T-cell (primary cell): ENCODE measurements at regions of chr1 and their contacts with region 1.

Region 1: GRCh38 chr1:78839704-78840277 is 166.7 kb downstream of the ADGRL4 start:
- DNase-seq: peak in 5 of 35 experiments; percentile 1 to 48 (median 2)
- ATAC-seq: no peak
- H3K4me3 ChIP-seq: no peak overlapping the region
- H3K4me3 Mint-ChIP-seq: no peak overlapping the region
- H3K27ac ChIP-seq: no peak overlapping the region
- H3K27ac Mint-ChIP-seq: no peak overlapping the region
- H3K4me1 ChIP-seq: peaks cover 0 to 2% of the 10 kb centered on the region in 2 experiments
- H3K4me1 Mint-ChIP-seq: peaks cover 13 to 21% (median 13%) of the 10 kb centered on the region in 3 donors
- H3K27me3 ChIP-seq: no peaks in the 10 kb centered on the region
- H3K27me3 Mint-ChIP-seq: no peaks in the 10 kb centered on the region

Region 2: DNA sequence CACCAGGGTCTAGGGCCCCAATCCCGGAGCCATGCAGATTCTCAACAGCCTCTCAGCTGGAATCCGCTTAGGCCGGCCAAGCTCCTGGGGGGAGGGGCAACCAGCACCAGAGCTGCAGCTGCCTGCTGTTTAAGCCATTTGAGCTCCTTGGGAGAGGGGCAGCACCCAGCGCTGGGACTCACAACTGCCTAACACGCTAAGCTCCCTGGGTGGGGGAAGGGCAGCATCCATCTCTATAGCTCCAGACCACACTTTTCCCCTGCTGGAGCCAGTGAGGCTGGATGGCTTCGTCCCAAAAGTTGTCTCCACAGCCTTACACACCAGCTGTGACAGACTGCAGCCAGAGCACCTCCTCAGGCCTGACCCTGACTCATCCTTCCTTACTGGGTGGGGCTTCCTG is 355.9 kb before region 1 on chr1:
- CTCF ChIA-PET with region 1: no interaction called
- POLR2A ChIA-PET with region 1: no interaction called
- DNase-seq: no peak
- ATAC-seq: no peak
- H3K4me3 ChIP-seq: no peak overlapping the region
- H3K4me3 Mint-ChIP-seq: no peak overlapping the region
- H3K27ac ChIP-seq: no peak overlapping the region
- H3K27ac Mint-ChIP-seq: no peak overlapping the region
- H3K4me1 ChIP-seq: no peaks in the 10 kb centered on the region
- H3K4me1 Mint-ChIP-seq: no peaks in the 10 kb centered on the region
- H3K27me3 ChIP-seq: peaks cover 0 to 9% of the 10 kb centered on the region in 2 experiments
- H3K27me3 Mint-ChIP-seq: peaks cover 16 to 19% of the 10 kb centered on the region in 2 donors

Region 3: DNA sequence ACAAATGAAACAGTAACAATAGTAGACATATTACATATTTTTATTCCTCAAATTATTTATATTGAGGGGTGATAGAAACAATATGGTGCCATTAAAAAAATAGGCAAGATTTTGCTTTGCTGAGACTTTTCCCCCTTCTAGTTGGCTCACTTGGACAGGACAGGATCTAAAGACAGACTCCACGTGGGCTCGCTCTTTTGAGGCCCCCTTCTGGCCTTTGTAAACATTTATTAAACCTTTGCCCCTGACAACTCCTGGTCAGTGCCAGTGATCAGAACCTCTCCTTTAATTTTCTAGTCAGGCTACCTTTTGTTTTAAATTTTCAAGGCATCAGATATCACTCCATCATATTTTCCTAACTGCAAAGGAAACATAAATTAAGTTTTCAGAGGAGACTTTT is 269.3 kb before region 1 on chr1:
- CTCF ChIA-PET with region 1: interaction called in 1 of 2 experiments, 11 read pairs
- POLR2A ChIA-PET with region 1: no interaction called
- DNase-seq: no peak
- ATAC-seq: no peak
- H3K4me3 ChIP-seq: no peak overlapping the region
- H3K4me3 Mint-ChIP-seq: no peak overlapping the region
- H3K27ac ChIP-seq: no peak overlapping the region
- H3K27ac Mint-ChIP-seq: no peak overlapping the region
- H3K4me1 ChIP-seq: no peaks in the 10 kb centered on the region
- H3K4me1 Mint-ChIP-seq: no peaks in the 10 kb centered on the region
- H3K27me3 ChIP-seq: no peaks in the 10 kb centered on the region
- H3K27me3 Mint-ChIP-seq: no peaks in the 10 kb centered on the region